ENCODE measurements at regions of chr7 and their contacts with region 1.

Region 1: DNA sequence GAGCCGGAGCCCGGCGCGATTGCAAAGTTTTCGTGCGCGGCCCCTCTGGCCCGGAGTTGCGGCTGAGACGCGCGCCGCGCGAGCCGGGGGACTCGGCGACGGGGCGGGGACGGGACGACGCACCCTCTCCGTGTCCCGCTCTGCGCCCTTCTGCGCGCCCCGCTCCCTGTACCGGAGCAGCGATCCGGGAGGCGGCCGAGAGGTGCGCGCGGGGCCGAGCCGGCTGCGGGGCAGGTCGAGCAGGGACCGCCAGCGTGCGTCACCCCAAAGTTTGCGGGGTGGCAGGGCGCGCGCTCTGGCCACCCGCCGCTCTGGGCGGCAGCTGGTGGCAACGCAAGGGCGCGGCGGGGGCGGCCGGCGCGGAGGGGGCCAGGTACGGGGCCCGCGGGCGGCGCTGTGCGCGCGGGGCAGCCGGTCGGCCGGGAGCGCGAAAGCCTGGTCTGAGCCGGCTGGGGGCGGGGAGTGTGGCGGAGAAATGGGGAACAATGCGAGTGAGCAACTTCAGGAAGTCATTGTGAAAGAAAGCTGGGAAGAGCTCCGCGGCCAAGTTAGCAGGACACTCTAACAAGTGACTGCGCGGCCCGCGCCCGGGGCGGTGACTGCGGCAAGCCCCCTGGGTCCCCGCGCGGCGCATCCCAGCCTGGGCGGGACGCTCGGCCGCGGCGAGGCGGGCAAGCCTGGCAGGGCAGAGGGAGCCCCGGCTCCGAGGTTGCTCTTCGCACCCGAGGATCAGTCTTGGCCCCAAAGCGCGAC is at the start of gene IKZF1:
- DNase-seq: peak; percentile 45 to 71 (median 53)
- H3K4me3 ChIP-seq: peak within 1 kb of the TSS; percentile 92
- H3K4me3 Mint-ChIP-seq: peak within 1 kb of the TSS; percentile 95 to 100 (median 99)
- H3K27ac ChIP-seq: peak within 1 kb of the TSS; percentile 86
- H3K27ac Mint-ChIP-seq: peak within 1 kb of the TSS; percentile 92 to 99 (median 98)
- H3K4me1 ChIP-seq: peaks cover 50% of the 10 kb centered on the region
- H3K4me1 Mint-ChIP-seq: peaks cover 44 to 60% (median 59%) of the 10 kb centered on the region in 3 donors
- H3K27me3 ChIP-seq: no peaks in the 10 kb centered on the region
- H3K27me3 Mint-ChIP-seq: peaks cover 0 to 2% of the 10 kb centered on the region in 2 donors
- total RNA-seq, gene IKZF1: 225 to 226 TPM

Region 2: DNA sequence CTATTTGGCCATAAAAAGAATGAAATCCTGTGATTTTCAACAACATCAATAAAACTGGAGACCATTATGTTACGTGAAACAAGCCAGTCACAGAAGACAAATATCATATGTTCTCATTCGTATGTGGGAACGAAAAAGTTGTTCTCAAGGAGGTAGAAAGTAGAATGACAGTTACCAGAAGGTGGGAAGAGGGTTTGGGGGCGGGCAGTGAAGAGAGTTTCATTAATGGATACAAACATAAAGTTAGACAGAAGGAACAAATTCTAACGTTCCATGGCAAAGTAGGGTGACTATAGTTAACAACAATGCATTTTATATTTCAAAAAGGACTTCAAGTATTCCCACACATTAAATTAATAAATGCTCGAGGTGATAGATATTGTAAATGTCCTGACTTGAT is 308.7 kb before region 1 on chr7:
- CTCF ChIA-PET with region 1: no interaction called
- POLR2A ChIA-PET with region 1: no interaction called
- DNase-seq: no peak
- H3K4me3 ChIP-seq: no peak overlapping the region
- H3K4me3 Mint-ChIP-seq: no peak overlapping the region
- H3K27ac ChIP-seq: no peak overlapping the region
- H3K27ac Mint-ChIP-seq: no peak overlapping the region
- H3K4me1 ChIP-seq: no peaks in the 10 kb centered on the region
- H3K4me1 Mint-ChIP-seq: no peaks in the 10 kb centered on the region
- H3K27me3 ChIP-seq: no peaks in the 10 kb centered on the region
- H3K27me3 Mint-ChIP-seq: peaks cover 2 to 3% of the 10 kb centered on the region in 2 donors

Region 3: DNA sequence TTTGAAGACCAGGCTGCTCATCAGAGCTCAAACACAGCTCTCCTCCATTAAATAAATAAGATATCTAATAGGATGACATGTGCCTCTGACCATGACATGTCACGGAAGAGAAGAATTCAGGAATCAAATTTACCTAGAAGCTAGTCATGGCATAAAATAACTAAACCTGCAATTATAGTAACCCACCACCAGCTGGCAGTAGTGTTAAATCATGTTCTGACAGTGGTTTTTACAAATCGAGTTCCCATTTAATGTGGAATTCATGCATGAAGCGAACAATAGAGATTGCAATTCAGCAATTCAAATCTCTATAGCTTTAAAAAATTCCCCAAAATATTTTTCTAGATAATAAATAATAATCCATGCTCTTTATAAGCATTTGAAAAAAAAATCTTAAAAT is 74.4 kb before region 1 on chr7:
- CTCF ChIA-PET with region 1: interaction called, 11 read pairs
- POLR2A ChIA-PET with region 1: interaction called, 4 read pairs
- DNase-seq: no peak
- H3K4me3 ChIP-seq: no peak overlapping the region
- H3K4me3 Mint-ChIP-seq: no peak overlapping the region
- H3K27ac ChIP-seq: no peak overlapping the region
- H3K27ac Mint-ChIP-seq: no peak overlapping the region
- H3K4me1 ChIP-seq: peaks cover 28% of the 10 kb centered on the region
- H3K4me1 Mint-ChIP-seq: peaks cover 33 to 38% (median 38%) of the 10 kb centered on the region in 3 donors
- H3K27me3 ChIP-seq: no peaks in the 10 kb centered on the region
- H3K27me3 Mint-ChIP-seq: no peaks in the 10 kb centered on the region

Region 4: GRCh38 chr7:50281680-50282445 is 22.5 kb before region 1 on chr7:
- CTCF ChIA-PET with region 1: interaction called, 5 read pairs
- POLR2A ChIA-PET with region 1: interaction called, 15 read pairs
- DNase-seq: peak in 1 of 5 donors; percentile 47
- H3K4me3 ChIP-seq: peak overlapping the region; percentile 40
- H3K4me3 Mint-ChIP-seq: peak overlapping the region; percentile 32 to 75 (median 51)
- H3K27ac ChIP-seq: no peak overlapping the region
- H3K27ac Mint-ChIP-seq: peak overlapping the region; percentile 25 to 89 (median 68)
- H3K4me1 ChIP-seq: peaks cover 46% of the 10 kb centered on the region
- H3K4me1 Mint-ChIP-seq: peaks cover 33 to 64% (median 50%) of the 10 kb centered on the region in 3 donors
- H3K27me3 ChIP-seq: no peaks in the 10 kb centered on the region
- H3K27me3 Mint-ChIP-seq: no peaks in the 10 kb centered on the region

Region 5: DNA sequence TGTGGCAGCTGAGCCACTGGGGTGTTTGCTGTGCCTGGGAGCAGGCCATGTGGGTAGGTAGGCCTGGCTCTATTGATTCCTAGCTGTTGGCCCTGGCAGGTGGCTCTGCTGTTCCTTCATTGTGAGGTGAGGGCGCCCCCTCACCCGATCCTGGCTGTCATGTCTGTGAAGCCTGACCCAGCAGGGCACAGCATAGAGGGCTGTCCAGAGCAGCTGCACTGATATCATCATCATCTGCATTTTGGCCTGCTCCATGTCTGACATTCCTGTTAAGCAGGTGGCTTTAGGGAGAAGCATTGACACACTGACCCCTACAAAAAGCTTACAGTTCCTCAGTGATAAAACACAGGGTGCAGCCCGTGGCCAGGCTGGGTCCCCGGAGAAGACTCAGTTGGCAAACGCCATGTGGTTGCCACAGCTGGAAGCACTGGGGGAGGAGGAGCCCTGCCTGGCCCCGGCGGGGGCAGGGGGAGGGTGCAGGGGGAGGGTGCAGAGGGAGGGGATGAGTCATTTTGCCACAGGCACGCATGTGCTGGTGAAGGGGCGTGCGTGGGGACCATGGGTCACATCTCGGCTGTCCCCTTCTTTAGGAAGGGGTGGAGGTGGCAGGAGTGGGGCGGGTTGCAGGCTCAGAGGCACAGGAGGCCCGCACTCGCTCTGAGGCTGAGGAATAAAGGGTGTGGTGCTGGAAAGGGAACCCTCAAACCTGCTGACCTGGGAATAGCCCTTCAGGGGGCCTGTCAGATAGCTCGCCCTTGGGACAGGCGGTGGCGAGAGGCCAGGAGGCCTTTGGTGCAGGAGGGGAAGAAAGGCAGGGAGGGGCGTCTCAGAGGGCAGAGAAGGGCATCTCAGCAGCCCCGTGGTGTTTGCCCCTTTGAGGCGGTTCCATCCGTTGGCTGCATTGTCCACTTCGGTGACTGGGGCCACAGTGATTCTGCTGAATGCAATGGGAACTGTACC is 31.7 kb after region 1 on chr7:
- CTCF ChIA-PET with region 1: interaction called, 815 read pairs
- POLR2A ChIA-PET with region 1: interaction called, 11 read pairs
- DNase-seq: peak; percentile 71 to 93 (median 77)
- H3K4me3 ChIP-seq: peak overlapping the region; percentile 32
- H3K4me3 Mint-ChIP-seq: no peak overlapping the region
- H3K27ac ChIP-seq: peak overlapping the region; percentile 49
- H3K27ac Mint-ChIP-seq: no peak overlapping the region
- H3K4me1 ChIP-seq: peaks cover 100% of the 10 kb centered on the region
- H3K4me1 Mint-ChIP-seq: peaks cover 0 to under 1% (median 0%) of the 10 kb centered on the region in 3 donors
- H3K27me3 ChIP-seq: no peaks in the 10 kb centered on the region
- H3K27me3 Mint-ChIP-seq: no peaks in the 10 kb centered on the region

Region 6: DNA sequence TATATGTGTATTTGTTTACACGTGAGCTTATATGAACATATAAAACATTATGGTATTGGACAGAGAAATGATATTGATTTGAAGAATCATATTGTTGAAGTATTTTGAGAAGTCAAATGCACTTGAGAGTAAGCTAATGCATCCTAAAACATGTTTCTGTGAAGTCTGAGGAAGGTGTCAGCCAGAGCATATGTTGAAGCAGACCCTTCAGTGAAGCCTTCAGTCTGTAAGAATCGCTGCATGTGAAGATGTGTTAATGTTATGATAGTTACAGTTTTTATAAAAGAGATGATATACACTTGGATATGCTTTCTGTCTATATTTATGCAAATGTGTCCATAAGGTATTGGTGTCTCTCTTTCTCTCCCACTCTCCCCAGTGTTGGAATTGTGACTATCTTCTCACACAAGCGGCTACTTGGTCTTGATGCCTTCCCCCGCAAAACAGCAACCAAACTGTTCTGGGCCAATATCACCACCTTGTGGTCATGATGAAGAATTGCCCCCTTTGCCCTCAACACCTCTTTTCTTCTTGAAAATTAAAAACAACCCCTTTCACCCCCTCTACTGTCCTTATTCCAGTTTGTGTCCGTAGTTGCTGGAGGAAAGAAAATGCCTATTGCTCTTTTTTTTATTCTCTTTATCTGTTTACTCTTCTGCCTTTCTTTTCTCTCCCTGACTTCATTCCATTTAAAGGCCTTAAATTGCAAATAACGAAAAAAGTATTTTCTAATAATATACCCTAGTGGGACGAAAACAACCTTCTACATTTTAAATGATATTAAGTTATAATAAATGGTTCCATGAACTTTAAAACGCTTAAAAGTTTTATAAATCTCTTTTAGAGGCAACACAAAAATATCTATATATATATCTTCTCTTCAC is 65.1 kb after region 1 on chr7:
- CTCF ChIA-PET with region 1: interaction called, 815 read pairs
- POLR2A ChIA-PET with region 1: interaction called, 49 read pairs
- DNase-seq: peak in 4 of 5 donors; percentile 44 to 82 (median 72)
- H3K4me3 ChIP-seq: peak overlapping the region; percentile 27
- H3K4me3 Mint-ChIP-seq: peak overlapping the region; percentile 7 to 72 (median 62)
- H3K27ac ChIP-seq: no peak overlapping the region
- H3K27ac Mint-ChIP-seq: peak overlapping the region in 7 of 8 donors; percentile 87 to 100 (median 93)
- H3K4me1 ChIP-seq: peaks cover 97% of the 10 kb centered on the region
- H3K4me1 Mint-ChIP-seq: peaks cover 94 to 100% (median 98%) of the 10 kb centered on the region in 3 donors
- H3K27me3 ChIP-seq: no peaks in the 10 kb centered on the region
- H3K27me3 Mint-ChIP-seq: no peaks in the 10 kb centered on the region

Region 7: DNA sequence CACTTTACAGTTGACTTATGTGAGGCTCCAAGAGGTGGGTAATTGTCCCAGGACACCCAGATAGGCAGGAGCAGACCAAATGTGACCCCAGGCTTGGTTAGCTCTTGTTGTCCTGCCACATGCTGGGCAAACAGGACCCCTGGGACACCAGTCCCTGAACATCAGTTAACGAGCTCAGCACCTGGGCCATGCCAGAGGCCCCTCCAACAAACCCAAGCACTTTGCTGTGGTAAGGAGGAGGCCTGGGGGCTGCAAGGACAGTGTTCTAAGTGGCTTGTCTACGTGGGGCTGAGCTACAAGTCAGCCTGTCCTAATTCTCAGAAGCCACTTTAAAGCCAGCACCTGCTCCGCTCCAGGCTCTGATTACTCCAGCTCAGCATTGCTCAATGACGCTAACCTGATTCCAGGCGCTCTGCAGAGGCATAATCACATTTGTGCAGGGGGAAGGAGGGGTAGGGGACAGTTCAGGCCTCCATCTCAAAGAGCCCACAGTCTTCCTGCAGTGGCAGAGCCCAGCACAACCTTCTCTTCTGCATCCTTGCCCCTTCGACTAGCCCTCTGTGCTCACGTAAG is 203.7 kb after region 1 on chr7:
- CTCF ChIA-PET with region 1: no interaction called
- POLR2A ChIA-PET with region 1: no interaction called
- DNase-seq: no peak
- H3K4me3 ChIP-seq: no peak overlapping the region
- H3K4me3 Mint-ChIP-seq: no peak overlapping the region
- H3K27ac ChIP-seq: no peak overlapping the region
- H3K27ac Mint-ChIP-seq: no peak overlapping the region
- H3K4me1 ChIP-seq: no peaks in the 10 kb centered on the region
- H3K4me1 Mint-ChIP-seq: no peaks in the 10 kb centered on the region
- H3K27me3 ChIP-seq: no peaks in the 10 kb centered on the region
- H3K27me3 Mint-ChIP-seq: peaks cover 7 to 35% of the 10 kb centered on the region in 2 donors